SK-N-SH (cell line): ENCODE measurements at regions of chr17 and their contacts with region 1.

Region 1: DNA sequence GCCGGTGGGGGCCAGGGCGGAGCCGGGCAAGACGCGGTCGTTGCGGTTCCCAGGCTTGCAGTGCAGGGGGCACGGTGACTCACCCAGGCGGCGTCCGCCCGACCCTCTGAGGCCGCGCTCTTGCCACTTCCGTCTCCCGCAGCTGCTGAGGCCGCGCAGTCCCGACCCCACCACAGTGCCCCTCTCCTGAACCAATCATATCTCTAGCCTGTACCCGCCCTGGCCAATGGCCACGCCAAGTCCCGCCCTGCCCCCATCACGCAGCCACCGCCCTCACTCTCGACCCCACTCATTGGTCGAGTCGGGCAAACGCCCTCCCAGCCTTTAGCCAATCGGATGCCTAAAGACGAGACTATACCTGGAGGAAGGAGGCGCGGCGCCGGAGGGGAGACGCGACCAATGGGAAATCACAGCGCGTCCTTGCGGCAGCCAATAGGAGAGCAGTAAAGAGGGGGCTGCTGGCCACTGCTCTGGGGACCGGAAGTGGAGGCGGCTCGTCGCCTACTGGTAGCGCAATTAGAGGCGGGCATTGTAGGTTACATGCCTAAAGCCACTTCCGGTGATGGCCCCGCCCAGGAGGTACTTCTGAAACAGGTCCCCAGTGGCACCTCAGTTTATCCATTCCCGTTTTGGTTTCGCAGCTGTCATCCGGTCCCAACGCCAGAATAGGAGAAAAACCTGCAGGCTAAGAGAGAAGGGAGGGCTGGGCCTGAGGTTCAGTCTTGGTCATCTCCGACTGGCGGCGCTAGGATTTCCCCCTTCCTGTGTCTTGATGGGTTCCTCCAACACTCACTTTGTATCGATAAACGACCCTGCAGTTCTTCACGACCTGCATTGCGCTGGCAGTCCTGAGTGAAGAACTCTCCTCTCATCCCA is 3.5 kb upstream of the MTMR4 start:
- DNase-seq: peak; percentile 96
- H3K4me3 ChIP-seq: peak overlapping the region; percentile 87 to 95
- H3K27ac ChIP-seq: peak overlapping the region; percentile 92 to 97
- H3K4me1 ChIP-seq: peaks cover 5 to 25% of the 10 kb centered on the region in 2 experiments; a peak in 2 of 4 replicates
- H3K27me3 ChIP-seq: no peaks in the 10 kb centered on the region
- CTCF ChIP-seq: no peak
- EP300 ChIP-seq: peak; percentile 18 to 30; a peak in 2 of 4 replicates
- RAD21 ChIP-seq: no peak

Region 2: GRCh38 chr17:58277107-58277801 is 240.7 kb before region 1 on chr17:
- CTCF ChIA-PET with region 1: no interaction called
- POLR2A ChIA-PET with region 1: no interaction called
- DNase-seq: no peak
- H3K4me3 ChIP-seq: no peak overlapping the region
- H3K27ac ChIP-seq: no peak overlapping the region
- H3K4me1 ChIP-seq: no peaks in the 10 kb centered on the region; a peak in 1 of 4 replicates
- H3K27me3 ChIP-seq: peaks cover 24% of the 10 kb centered on the region
- CTCF ChIP-seq: peak; percentile 37
- EP300 ChIP-seq: no peak
- RAD21 ChIP-seq: peak; percentile 57

Region 3: GRCh38 chr17:58447039-58447975 is 70.7 kb before region 1 on chr17:
- CTCF ChIA-PET with region 1: no interaction called
- POLR2A ChIA-PET with region 1: no interaction called
- DNase-seq: peak; percentile 78
- H3K4me3 ChIP-seq: peak overlapping the region in 1 of 2 experiments; percentile 31; a peak in 1 of 4 replicates
- H3K27ac ChIP-seq: no peak overlapping the region
- H3K4me1 ChIP-seq: no peaks in the 10 kb centered on the region
- H3K27me3 ChIP-seq: no peaks in the 10 kb centered on the region; the same call in 1 of the 2 replicates
- CTCF ChIP-seq: peak; percentile 88
- EP300 ChIP-seq: no peak
- RAD21 ChIP-seq: peak; percentile 98

Region 4: GRCh38 chr17:58504826-58505521 is 13.0 kb before region 1 on chr17:
- CTCF ChIA-PET with region 1: interaction called, 12 read pairs
- POLR2A ChIA-PET with region 1: interaction called, 12 read pairs
- DNase-seq: no peak
- H3K4me3 ChIP-seq: no peak overlapping the region
- H3K27ac ChIP-seq: no peak overlapping the region
- H3K4me1 ChIP-seq: no peaks in the 10 kb centered on the region
- H3K27me3 ChIP-seq: no peaks in the 10 kb centered on the region
- CTCF ChIP-seq: no peak
- EP300 ChIP-seq: no peak
- RAD21 ChIP-seq: no peak

Region 5: GRCh38 chr17:58531661-58532554 is 13.9 kb after region 1 on chr17:
- CTCF ChIA-PET with region 1: interaction called, 112 read pairs
- POLR2A ChIA-PET with region 1: interaction called, 7 read pairs
- DNase-seq: peak; percentile 95
- H3K4me3 ChIP-seq: peak overlapping the region; percentile 59 to 74
- H3K27ac ChIP-seq: no peak overlapping the region
- H3K4me1 ChIP-seq: peaks cover 5 to 21% of the 10 kb centered on the region in 2 experiments; a peak in 2 of 4 replicates
- H3K27me3 ChIP-seq: no peaks in the 10 kb centered on the region
- CTCF ChIP-seq: no peak
- EP300 ChIP-seq: no peak
- RAD21 ChIP-seq: no peak

Region 6: GRCh38 chr17:58587702-58588254 is 69.8 kb after region 1 on chr17:
- CTCF ChIA-PET with region 1: interaction called, 15 read pairs
- POLR2A ChIA-PET with region 1: interaction called, 4 read pairs
- DNase-seq: peak; percentile 88
- H3K4me3 ChIP-seq: no peak overlapping the region
- H3K27ac ChIP-seq: no peak overlapping the region
- H3K4me1 ChIP-seq: no peaks in the 10 kb centered on the region; a peak in 1 of 4 replicates
- H3K27me3 ChIP-seq: no peaks in the 10 kb centered on the region
- CTCF ChIP-seq: peak; percentile 99
- EP300 ChIP-seq: no peak
- RAD21 ChIP-seq: peak; percentile 91

Region 7: DNA sequence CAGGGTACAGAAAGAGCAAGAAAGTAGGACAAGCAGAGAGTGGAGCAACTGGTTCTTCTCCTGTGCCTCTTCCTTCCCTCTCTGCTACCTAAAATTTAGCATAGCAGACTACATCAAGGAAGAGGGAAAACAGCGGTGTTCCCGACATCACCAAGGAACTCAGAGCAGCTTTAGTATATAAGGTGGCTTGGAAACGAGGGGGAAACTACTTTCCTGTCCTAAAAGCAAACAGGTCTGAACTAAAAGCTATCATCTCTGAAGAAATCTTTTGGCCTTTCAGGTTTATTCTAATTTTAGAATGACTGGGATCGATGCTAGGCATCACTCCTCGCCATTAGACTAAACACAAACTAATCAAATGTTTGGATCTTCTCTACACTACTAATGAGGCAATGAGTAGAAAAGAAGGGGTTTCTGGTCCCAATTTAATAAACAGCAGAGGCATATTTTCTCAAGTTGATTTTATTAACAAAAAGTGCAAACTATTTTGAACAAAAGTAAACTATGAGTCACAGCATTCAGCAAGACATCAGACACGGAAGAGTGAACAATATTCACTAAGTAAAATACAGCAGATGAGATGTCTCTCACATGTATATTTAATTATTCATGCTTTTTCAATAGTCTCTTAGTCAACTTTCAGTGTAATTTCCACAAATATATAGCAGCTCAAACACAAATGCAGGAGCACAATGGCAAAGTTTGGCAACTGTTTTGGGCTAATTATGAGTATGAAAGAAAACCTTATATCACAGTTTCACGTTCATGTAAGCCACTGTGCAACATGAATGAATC is 480.0 kb after region 1 on chr17:
- CTCF ChIA-PET with region 1: interaction called, 43 read pairs
- POLR2A ChIA-PET with region 1: no interaction called
- DNase-seq: no peak
- H3K4me3 ChIP-seq: no peak overlapping the region
- H3K27ac ChIP-seq: no peak overlapping the region
- H3K4me1 ChIP-seq: peaks cover 0 to 3% of the 10 kb centered on the region in 2 experiments; a peak in 2 of 4 replicates
- H3K27me3 ChIP-seq: no peaks in the 10 kb centered on the region
- CTCF ChIP-seq: no peak
- EP300 ChIP-seq: no peak
- RAD21 ChIP-seq: no peak

Region 8: GRCh38 chr17:59010026-59010425 is 492.1 kb after region 1 on chr17:
- CTCF ChIA-PET with region 1: interaction called, 43 read pairs
- POLR2A ChIA-PET with region 1: interaction called, 14 read pairs
- DNase-seq: no peak
- H3K4me3 ChIP-seq: no peak overlapping the region
- H3K27ac ChIP-seq: no peak overlapping the region
- H3K4me1 ChIP-seq: no peaks in the 10 kb centered on the region
- H3K27me3 ChIP-seq: no peaks in the 10 kb centered on the region
- CTCF ChIP-seq: no peak
- EP300 ChIP-seq: no peak
- RAD21 ChIP-seq: no peak